ENCODE measurements at regions of chr5 and their contacts with region 1.

Region 1: GRCh38 chr5:177113566-177114424 is 19.8 kb upstream of the NSD1 start:
- DNase-seq: peak; percentile 63 to 84 (median 73)
- ATAC-seq: peak in 3 of 4 donors; percentile 60 to 68 (median 63)
- H3K4me3 ChIP-seq: peak overlapping the region in 6 of 12 donors; percentile 24 to 37 (median 29)
- H3K27ac ChIP-seq: peak overlapping the region in 9 of 12 donors; percentile 12 to 71 (median 54)
- H3K4me1 ChIP-seq: peaks cover 0 to 28% (median 15%) of the 10 kb centered on the region in 12 donors
- H3K27me3 ChIP-seq: no peaks in the 10 kb centered on the region
- CTCF ChIP-seq: peak; percentile 95 to 100 (median 99)
- POLR2A ChIP-seq: no peak

Region 2: DNA sequence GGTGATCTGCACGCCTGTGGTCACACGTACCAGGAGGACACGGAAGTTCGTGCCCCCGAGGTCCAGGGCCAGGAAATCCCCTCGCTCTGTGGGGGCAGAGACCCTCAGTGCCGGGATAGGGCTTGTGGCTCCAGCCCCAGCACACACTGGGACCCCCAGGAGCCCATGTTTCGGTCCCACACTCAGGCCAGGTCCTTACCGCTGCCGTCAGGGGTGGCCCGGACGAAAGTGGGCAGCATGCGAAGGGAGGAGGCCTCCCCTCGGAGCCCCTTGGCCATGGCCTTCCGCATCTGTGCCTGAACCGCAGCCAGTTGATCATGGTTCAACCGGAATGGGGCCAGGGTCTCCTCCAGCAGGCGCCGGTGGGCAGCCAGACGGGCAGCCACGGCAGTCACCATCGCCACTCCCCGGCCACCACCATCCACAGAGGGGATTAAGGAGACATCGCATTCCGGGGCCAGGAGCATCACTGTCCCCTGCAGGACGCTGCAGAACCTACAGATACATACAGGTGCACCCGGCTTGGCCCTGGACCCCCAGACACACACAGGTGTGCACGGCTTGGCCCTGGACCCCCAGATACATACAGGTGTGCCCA is 226.4 kb before region 1 on chr5:
- intact Hi-C with region 1: no loop called
- DNase-seq: peak in 2 of 5 donors; percentile 21 to 55
- ATAC-seq: no peak
- H3K4me3 ChIP-seq: no peak overlapping the region
- H3K27ac ChIP-seq: no peak overlapping the region
- H3K4me1 ChIP-seq: no peaks in the 10 kb centered on the region
- H3K27me3 ChIP-seq: peaks cover 0 to 4% (median 0%) of the 10 kb centered on the region in 9 donors
- CTCF ChIP-seq: no peak
- POLR2A ChIP-seq: no peak

Region 3: GRCh38 chr5:177071666-177072385 is 42.0 kb before region 1 on chr5:
- intact Hi-C with region 1: loop called (anchors 1 to 5 kb)
- DNase-seq: peak in 3 of 5 donors; percentile 56 to 73 (median 61)
- ATAC-seq: peak; percentile 54 to 85 (median 78)
- H3K4me3 ChIP-seq: no peak overlapping the region
- H3K27ac ChIP-seq: no peak overlapping the region
- H3K4me1 ChIP-seq: peaks cover 0 to 5% (median 0%) of the 10 kb centered on the region in 12 donors
- H3K27me3 ChIP-seq: no peaks in the 10 kb centered on the region
- CTCF ChIP-seq: peak; percentile 79 to 91 (median 87)
- POLR2A ChIP-seq: no peak

Region 4: GRCh38 chr5:177195307-177195952 is 81.6 kb after region 1 on chr5:
- intact Hi-C with region 1: loop called in 1 of 10 experiments (anchors 5 kb)
- DNase-seq: no peak
- ATAC-seq: peak in 2 of 4 donors; percentile 35 to 55
- H3K4me3 ChIP-seq: no peak overlapping the region
- H3K27ac ChIP-seq: peak overlapping the region in 2 of 12 donors; percentile 31 to 35
- H3K4me1 ChIP-seq: peaks cover 0 to 22% (median 5%) of the 10 kb centered on the region in 12 donors
- H3K27me3 ChIP-seq: no peaks in the 10 kb centered on the region
- CTCF ChIP-seq: no peak
- POLR2A ChIP-seq: no peak

Region 5: GRCh38 chr5:177256296-177256695 is 142.5 kb after region 1 on chr5:
- intact Hi-C with region 1: loop called in 3 of 10 experiments (anchors 10 kb)
- DNase-seq: no peak
- ATAC-seq: no peak
- H3K4me3 ChIP-seq: no peak overlapping the region
- H3K27ac ChIP-seq: no peak overlapping the region
- H3K4me1 ChIP-seq: peaks cover 0 to 4% (median 0%) of the 10 kb centered on the region in 12 donors
- H3K27me3 ChIP-seq: no peaks in the 10 kb centered on the region
- CTCF ChIP-seq: no peak
- POLR2A ChIP-seq: no peak

Region 6: GRCh38 chr5:177303121-177303924 is 189.5 kb after region 1 on chr5 and contains the starts of genes PRELID1 and RAB24:
- intact Hi-C with region 1: loop called in 9 of 10 experiments (anchors 5 to 10 kb)
- DNase-seq: peak; percentile 87 to 94 (median 91)
- ATAC-seq: peak; percentile 49 to 84 (median 76)
- H3K4me3 ChIP-seq: peak within 1 kb of the TSS; percentile 76 to 100 (median 94)
- H3K27ac ChIP-seq: peak within 1 kb of the TSS; percentile 73 to 96 (median 88)
- H3K4me1 ChIP-seq: peaks cover 0 to 87% (median 46%) of the 10 kb centered on the region in 12 donors
- H3K27me3 ChIP-seq: no peaks in the 10 kb centered on the region
- CTCF ChIP-seq: peak in 10 of 12 donors; percentile 12 to 64 (median 38)
- POLR2A ChIP-seq: peak in 1 of 2 donors; percentile 82
- total RNA-seq, gene PRELID1: 30.3 to 80.6 (median 42.4) TPM
- total RNA-seq, gene RAB24: 11.6 to 27.5 (median 18.9) TPM

Region 7: DNA sequence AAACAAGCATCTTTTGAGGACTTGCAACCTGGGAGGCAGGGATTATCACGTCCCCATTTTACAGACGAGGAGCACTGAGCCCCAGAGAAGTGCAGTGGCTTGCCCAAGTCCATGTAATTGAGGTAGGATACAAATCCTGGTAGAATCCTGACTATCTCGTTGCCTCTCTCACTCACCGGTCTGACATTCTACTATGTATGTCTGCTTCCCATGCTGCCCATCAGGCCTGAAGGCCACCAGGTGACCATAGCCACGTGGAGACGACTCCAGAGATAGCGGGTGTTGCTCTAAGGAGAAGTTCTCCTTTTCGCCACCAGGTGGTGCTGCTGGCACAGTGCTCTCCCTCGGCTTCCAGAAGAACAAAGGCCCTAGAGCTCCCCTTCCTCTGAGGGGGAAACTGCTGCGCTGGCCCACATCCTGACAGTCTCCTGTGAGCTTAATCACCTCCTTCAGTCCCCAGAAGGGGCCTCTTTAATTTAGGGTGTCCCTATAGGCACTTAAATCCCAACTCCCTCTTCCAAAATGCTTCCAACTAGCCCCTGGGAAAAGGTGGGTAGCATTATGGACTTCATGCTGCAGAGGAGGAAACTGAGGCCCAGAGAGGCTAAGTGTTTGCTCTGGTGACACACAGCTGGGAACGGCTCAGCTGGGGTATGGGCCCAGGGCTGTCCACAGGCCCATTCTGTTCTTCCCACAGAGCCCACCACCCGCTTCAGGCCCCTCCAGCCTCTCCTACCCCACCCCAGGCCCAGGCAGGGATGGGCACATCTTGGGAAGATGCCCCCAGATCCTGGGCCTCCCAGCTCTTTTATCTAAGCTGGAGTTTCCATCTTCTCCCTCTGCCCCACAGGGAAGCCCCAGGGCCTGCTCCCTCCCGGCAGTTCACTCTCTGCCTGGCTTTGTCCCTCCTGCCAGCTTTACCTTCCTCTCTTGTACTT is 276.8 kb after region 1 on chr5:
- intact Hi-C with region 1: loop called in 1 of 10 experiments (anchors 10 kb)
- DNase-seq: peak; percentile 69 to 83 (median 79)
- ATAC-seq: peak; percentile 77 to 89 (median 82)
- H3K4me3 ChIP-seq: no peak overlapping the region
- H3K27ac ChIP-seq: peak overlapping the region in 1 of 12 donors; percentile 68
- H3K4me1 ChIP-seq: peaks cover 0 to 25% (median 0%) of the 10 kb centered on the region in 12 donors
- H3K27me3 ChIP-seq: peaks cover 0 to 25% (median 0%) of the 10 kb centered on the region in 9 donors
- CTCF ChIP-seq: peak; percentile 4 to 99 (median 98)
- POLR2A ChIP-seq: no peak